Activated B cell treated with CpG ODN at 0.5 μM for 24 hours (primary cell): ENCODE measurements at regions of chr4 and their contacts with region 1.

Region 1: DNA sequence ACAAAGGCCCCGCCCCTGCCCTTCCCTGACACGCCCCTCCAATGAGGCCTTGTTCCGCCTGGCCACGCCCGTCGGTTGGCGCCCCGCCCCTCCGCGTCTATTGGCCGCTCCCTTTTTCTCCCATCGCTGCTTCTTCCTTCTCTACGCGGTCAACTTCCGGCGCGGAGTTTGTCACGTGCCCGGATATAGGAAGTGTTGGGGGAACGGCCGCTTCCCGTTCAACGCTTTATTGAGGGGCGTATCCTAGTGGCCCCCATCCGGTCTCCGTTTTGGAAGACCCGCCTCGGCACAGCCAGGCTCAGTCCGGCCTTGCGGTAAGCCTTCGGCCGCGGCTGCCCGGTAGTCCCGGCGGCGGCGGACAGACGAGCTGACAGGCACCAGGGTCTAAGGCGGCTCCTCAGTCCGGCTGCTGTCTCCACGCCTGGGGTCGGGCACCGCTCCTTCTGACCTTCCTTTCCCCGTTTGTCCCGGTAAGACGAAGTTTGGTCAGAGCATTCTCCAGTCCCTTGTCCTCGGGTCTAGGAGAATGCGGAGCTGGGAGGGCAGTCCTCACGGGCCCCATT is at the start of gene EXOC1:
- DNase-seq: peak; percentile 97
- ATAC-seq: peak; percentile 99
- H3K4me3 Mint-ChIP-seq: no peak within 1 kb of the TSS
- H3K27ac Mint-ChIP-seq: peak within 1 kb of the TSS; percentile 85
- H3K4me1 Mint-ChIP-seq: peaks cover 15% of the 10 kb centered on the region
- H3K27me3 Mint-ChIP-seq: peaks cover 8% of the 10 kb centered on the region
- CTCF ChIP-seq: no peak
- total RNA-seq, gene EXOC1: 28.7 and 34.8 TPM in 2 replicates

Region 2: GRCh38 chr4:55345980-55346850 is 507.4 kb before region 1 on chr4 and contains the start of gene SRD5A3:
- CTCF ChIA-PET with region 1: no interaction called
- POLR2A ChIA-PET with region 1: no interaction called
- intact Hi-C with region 1: loop called (anchors 2 kb)
- DNase-seq: peak; percentile 87
- ATAC-seq: peak; percentile 89
- H3K4me3 Mint-ChIP-seq: peak within 1 kb of the TSS; percentile 93
- H3K27ac Mint-ChIP-seq: peak within 1 kb of the TSS; percentile 94
- H3K4me1 Mint-ChIP-seq: peaks cover 13% of the 10 kb centered on the region
- H3K27me3 Mint-ChIP-seq: peaks cover under 1% of the 10 kb centered on the region
- CTCF ChIP-seq: no peak
- total RNA-seq, gene SRD5A3: 4.5 and 5.7 TPM in 2 replicates

Region 3: GRCh38 chr4:55424791-55425190 is 428.8 kb before region 1 on chr4:
- CTCF ChIA-PET with region 1: no interaction called
- POLR2A ChIA-PET with region 1: no interaction called
- intact Hi-C with region 1: no loop called
- DNase-seq: no peak
- ATAC-seq: no peak
- H3K4me3 Mint-ChIP-seq: no peak overlapping the region
- H3K27ac Mint-ChIP-seq: no peak overlapping the region
- H3K4me1 Mint-ChIP-seq: no peaks in the 10 kb centered on the region
- H3K27me3 Mint-ChIP-seq: no peaks in the 10 kb centered on the region
- CTCF ChIP-seq: no peak

Region 4: DNA sequence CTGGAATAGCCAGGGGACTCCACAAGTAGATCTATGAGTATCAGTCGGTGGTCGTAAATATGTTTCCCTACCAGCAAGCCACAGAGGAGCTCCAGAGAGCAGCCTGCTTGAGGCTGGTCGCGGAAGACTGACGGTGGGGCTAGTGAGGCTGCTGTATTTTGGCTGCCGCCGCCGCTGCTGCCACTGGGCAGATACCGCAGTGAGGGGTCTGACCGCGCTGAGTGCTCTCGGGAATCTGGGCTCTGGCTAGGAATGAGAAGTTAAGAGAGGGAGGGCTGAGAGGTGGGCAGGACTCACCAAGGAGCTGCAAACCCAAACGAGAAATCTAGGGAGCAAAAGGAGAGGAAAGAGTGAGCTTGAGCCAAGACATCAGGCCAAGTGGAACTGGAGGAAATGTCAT is 33.9 kb before region 1 on chr4 and contains the start of gene EXOC1L:
- CTCF ChIA-PET with region 1: no interaction called
- POLR2A ChIA-PET with region 1: no interaction called
- intact Hi-C with region 1: no loop called
- DNase-seq: no peak
- ATAC-seq: no peak
- H3K4me3 Mint-ChIP-seq: no peak within 1 kb of the TSS
- H3K27ac Mint-ChIP-seq: no peak within 1 kb of the TSS
- H3K4me1 Mint-ChIP-seq: peaks cover 3% of the 10 kb centered on the region
- H3K27me3 Mint-ChIP-seq: peaks cover 15% of the 10 kb centered on the region
- CTCF ChIP-seq: no peak
- total RNA-seq, gene EXOC1L: not detected in 2 replicates

Region 5: DNA sequence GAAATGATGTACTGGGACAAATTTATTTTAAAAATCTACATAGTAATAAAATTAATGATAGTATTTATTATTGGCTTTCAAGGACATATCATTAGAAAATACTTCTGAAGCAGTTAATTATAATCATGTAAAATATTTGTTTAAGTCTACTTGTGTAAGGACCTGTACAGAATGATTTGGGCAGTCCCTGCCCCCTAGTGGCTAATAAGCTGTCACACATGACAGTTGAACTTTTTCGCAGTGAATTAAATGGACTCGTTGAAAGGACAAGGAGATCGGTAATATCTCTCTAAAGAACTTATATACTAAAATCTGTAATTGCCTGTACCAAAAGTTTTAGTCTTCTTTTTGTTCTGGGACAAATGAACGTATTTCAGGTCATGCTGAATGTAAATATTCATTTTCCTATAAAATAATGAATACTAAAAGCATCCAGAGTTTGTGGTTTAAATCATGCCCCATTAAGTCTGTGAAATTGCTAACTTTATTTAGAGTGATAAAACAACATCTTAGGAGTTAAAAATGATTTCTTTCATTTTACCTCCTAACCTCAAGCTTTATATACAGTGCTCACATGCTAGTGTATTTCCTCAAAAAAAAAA is 13.5 kb after region 1 on chr4:
- CTCF ChIA-PET with region 1: interaction called, 16 read pairs
- POLR2A ChIA-PET with region 1: interaction called, 7 read pairs
- intact Hi-C with region 1: loop called (anchors 1 kb)
- DNase-seq: no peak
- ATAC-seq: peak; percentile 84
- H3K4me3 Mint-ChIP-seq: no peak overlapping the region
- H3K27ac Mint-ChIP-seq: no peak overlapping the region
- H3K4me1 Mint-ChIP-seq: peaks cover 22% of the 10 kb centered on the region
- H3K27me3 Mint-ChIP-seq: no peaks in the 10 kb centered on the region
- CTCF ChIP-seq: no peak

Region 6: GRCh38 chr4:55906999-55907398 is 53.4 kb after region 1 on chr4:
- CTCF ChIA-PET with region 1: no interaction called
- POLR2A ChIA-PET with region 1: no interaction called
- intact Hi-C with region 1: no loop called
- DNase-seq: no peak
- ATAC-seq: no peak
- H3K4me3 Mint-ChIP-seq: no peak overlapping the region
- H3K27ac Mint-ChIP-seq: no peak overlapping the region
- H3K4me1 Mint-ChIP-seq: peaks cover 7% of the 10 kb centered on the region
- H3K27me3 Mint-ChIP-seq: no peaks in the 10 kb centered on the region
- CTCF ChIP-seq: no peak

Region 7: DNA sequence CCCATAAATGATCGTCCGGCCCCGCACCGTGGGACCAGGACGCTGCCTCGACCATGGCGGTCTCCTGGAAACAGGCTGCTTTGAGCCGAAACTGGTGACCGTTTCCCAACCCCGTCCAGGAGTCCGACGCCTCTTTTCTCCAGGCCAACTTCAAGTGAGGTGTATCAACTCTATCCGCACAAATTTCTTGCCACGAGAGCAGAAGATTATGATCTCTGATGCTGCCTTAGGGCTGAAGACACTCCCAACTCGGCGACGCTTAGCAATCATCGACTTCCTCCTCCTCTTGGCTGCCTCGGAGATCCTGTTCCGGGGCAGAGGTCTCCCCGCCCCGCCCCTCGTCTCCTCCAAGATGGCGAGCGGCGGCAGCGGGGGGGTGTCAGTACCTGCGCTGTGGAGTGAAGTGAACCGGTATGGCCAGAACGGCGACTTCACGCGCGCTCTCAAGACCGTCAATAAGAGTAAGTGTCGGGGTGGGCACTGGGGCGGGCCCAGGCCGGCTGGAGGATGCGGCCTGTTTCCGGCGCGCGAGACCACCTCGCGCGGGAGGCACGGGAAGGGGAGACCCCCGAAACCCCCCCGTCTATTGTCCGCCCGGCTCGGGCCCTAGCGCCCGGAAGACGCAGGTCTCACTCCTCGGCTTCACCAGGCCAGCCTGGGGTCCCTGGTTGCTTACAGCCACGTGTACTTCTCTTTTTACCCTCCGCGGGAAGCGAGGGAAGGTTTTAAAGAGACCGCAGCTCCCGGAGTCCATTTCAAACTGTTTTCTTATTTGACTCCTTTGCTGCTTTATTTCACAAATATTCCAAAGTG is 613.9 kb after region 1 on chr4 and contains the start of gene SRP72:
- CTCF ChIA-PET with region 1: no interaction called
- POLR2A ChIA-PET with region 1: no interaction called
- intact Hi-C with region 1: loop called (anchors 2 kb)
- DNase-seq: peak; percentile 83
- ATAC-seq: peak; percentile 96
- H3K4me3 Mint-ChIP-seq: peak within 1 kb of the TSS; percentile 99
- H3K27ac Mint-ChIP-seq: peak within 1 kb of the TSS; percentile 96
- H3K4me1 Mint-ChIP-seq: peaks cover 57% of the 10 kb centered on the region
- H3K27me3 Mint-ChIP-seq: no peaks in the 10 kb centered on the region
- CTCF ChIP-seq: no peak
- total RNA-seq, gene SRP72: 139 TPM in 2 replicates

Region 8: DNA sequence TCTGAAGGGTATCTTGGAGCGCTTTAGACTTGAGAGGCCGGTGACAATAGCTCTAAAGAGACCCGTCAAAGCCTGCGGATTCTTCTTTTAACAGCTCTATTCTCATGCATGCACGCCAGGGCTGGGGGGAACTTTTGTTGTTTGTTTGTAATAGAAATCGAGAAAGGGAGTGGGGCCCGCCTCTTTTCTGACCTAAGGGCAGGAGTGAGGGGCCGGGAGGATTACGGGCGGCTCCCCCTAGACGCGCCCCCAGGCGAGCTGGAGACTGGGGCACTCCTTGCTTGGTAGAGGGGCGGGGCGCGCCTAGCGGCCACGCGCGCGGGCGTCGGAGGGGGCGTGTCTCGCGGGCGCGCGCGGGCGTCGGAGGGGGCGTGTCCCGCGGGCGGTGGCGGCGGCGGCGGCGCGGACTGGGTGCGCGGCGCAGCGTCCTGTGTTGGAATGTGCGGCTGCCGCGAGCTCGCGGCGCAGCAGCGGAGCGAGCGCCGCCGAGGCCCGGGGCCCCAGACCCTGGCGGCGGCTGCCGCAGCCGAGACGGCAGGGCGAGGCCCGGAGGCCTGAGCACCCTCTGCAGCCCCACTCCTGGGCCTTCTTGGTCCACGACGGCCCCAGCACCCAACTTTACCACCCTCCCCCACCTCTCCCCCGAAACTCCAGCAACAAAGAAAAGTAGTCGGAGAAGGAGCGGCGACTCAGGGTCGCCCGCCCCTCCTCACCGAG is 1054.1 kb after region 1 on chr4 and contains the start of gene REST:
- CTCF ChIA-PET with region 1: no interaction called
- POLR2A ChIA-PET with region 1: no interaction called
- intact Hi-C with region 1: loop called (anchors 1 kb)
- DNase-seq: peak; percentile 90
- ATAC-seq: peak; percentile 59
- H3K4me3 Mint-ChIP-seq: peak within 1 kb of the TSS; percentile 91
- H3K27ac Mint-ChIP-seq: peak within 1 kb of the TSS; percentile 77
- H3K4me1 Mint-ChIP-seq: peaks cover 41% of the 10 kb centered on the region
- H3K27me3 Mint-ChIP-seq: no peaks in the 10 kb centered on the region
- CTCF ChIP-seq: no peak
- total RNA-seq, gene REST: 48.3 and 49.1 TPM in 2 replicates